GM10248 (cell line): ENCODE measurements at regions of chr7 and their contacts with region 1.

Region 1: DNA sequence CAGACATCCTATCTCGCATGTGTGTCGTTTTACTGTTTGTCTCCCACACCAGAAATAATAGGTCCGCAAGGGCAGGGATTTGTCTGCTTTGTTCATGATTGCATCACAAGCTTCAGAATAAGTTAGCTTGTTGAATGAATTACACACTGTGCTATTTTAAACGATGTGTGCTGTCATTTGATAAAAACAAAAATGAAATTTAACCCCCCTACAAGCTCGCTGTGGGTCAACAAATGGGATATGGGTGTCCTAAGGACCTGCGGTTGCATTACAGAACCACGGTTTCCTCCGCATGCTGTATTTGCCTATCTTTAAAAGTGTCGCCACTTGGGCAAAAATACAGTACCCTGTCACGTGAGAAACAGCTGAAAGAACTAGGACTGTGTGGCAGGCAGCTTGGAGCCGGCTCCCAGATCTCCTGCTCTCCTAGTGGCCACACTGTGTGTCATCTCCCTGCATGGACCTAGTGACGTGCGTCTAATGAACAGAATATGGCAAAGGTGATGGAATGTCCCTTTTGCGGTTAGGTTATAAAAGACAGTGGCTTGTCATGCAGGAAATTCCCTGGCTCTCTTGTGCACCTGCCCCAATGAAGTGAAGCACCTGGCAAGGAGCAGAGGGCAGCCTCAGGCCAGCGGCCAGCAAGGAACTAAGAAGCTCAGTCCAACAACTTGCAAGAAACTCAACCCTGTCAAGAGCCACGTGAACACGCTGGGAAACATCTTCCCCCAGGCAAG is 32.9 kb upstream of the CRYGN start:
- DNase-seq: no peak
- CTCF ChIP-seq: no peak

Region 2: DNA sequence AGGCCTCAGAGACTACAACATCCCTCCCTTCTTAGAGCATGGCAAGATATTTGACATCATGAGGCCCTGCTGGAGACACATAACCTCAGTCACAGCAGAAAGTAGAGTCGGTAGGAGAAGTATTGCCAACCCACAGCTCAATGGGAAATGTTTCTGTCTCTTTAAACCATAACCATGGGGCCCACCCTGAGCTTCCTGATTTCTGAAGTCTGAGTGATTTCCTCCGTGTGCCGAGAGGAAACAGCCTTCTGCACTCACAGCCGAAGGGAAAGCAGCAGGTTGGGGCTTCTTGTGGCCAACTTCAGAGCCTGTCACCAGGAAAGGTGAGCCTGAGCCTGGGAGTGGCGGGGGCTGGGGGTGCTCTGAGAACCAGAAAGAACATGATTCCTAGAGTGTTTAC is 756.4 kb before region 1 on chr7 and contains the start of gene GIMAP1:
- CTCF ChIA-PET with region 1: no interaction called
- POLR2A ChIA-PET with region 1: no interaction called
- DNase-seq: no peak
- CTCF ChIP-seq: no peak

Region 3: GRCh38 chr7:150769768-150770167 is 703.0 kb before region 1 on chr7:
- CTCF ChIA-PET with region 1: no interaction called
- POLR2A ChIA-PET with region 1: no interaction called
- DNase-seq: no peak
- CTCF ChIP-seq: no peak

Region 4: GRCh38 chr7:151181011-151181431 is 291.8 kb before region 1 on chr7:
- CTCF ChIA-PET with region 1: no interaction called
- POLR2A ChIA-PET with region 1: no interaction called
- DNase-seq: no peak
- CTCF ChIP-seq: no peak

Region 5: GRCh38 chr7:151386301-151387132 is 86.3 kb before region 1 on chr7:
- CTCF ChIA-PET with region 1: no interaction called
- POLR2A ChIA-PET with region 1: no interaction called
- DNase-seq: no peak
- CTCF ChIP-seq: no peak

Region 6: DNA sequence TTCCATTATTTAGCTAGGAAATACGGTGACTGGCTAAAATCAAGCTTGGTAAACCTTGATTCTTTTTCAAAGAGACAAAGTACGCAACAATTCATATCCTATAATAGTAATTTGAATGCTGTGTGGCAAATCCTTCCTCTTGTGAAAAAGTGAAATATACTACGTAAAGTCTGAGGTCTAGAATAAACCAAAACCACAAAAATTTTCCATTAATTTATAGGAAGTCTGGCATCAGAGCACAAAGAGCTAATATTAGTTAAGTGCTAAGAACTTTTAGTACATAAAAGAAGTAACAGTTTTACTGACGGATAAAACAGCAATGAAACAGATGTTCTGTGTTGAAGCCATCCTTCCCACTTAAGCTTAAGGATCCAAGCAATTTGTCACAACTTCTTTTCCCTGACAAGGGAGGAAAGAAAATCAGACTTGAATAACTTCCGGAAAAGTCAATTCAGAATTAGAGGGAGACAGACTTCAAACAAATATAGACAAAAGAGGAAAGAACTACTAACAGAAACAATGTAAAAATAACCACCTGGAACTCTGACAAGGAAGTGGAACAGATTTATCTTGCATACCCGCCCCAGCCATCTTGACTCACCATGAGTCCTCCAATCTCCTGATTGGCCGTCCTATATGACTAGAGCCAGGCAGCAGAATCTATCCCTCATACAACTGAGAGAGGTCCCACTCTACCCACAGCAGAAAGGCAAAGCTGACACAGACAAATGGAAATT is 12.3 kb after region 1 on chr7:
- CTCF ChIA-PET with region 1: interaction called, 23 read pairs
- POLR2A ChIA-PET with region 1: no interaction called
- DNase-seq: no peak
- CTCF ChIP-seq: no peak

Region 7: DNA sequence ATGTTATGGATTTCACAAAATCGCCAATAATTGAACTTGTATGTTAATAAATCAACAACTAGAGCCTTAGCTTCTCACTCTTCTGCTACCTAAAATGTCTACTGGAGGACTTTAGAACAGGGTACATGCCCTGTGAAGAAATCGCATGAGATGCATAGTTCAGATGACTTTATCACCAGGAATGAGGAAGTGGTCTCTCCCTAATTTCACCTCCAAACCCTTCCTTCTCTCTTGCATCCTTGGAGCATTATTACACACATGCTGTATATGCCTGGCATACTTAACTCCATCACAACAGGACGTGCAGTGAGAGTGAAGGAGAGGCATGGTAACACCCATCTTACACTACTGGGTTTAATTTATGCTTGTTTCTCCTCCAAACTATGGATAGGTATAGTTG is 19.0 kb after region 1 on chr7:
- CTCF ChIA-PET with region 1: interaction called, 11 read pairs
- POLR2A ChIA-PET with region 1: interaction called, 3 read pairs
- DNase-seq: no peak
- CTCF ChIP-seq: no peak